Sciatic nerve (tissue), 2 donors: ENCODE measurements at regions of chr2 and their contacts with region 1.

Region 1: DNA sequence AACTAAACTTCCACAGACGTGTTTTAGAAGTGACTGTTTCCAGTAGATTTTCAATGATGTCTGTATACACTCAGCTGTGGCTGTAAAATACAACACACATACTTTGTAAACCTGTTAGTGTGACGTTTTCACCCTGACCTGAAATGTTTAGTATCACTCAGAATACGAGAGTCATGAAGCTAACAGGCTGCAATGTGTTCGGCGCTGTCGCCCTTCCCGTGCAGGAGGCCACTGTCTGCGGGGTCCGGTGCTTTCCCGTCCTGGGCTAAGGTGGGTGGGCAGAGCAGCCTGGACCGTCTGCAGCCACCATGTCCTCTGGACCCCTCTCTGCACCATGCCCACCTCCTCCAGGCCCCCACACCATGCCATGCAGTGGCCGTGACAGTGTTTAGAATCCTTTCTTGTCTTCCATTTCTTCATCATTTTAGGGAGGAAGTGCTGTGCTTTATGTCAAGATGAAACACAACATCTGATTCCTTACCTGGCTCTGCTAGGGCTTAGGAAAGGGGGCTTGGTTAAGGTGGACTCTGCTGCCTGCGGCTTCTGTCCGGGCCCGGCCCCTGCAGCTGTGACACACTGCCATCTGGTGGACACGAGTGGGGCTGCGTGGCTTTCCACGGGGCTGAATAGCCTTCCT is 53.8 kb upstream of the RBM44 start:
- DNase-seq: peak; percentile 90
- ATAC-seq: peak; percentile 94

Region 2: GRCh38 chr2:237669628-237670392 is 74.9 kb before region 1 on chr2:
- intact Hi-C with region 1: loop called (anchors 5 kb)
- DNase-seq: peak; percentile 70
- ATAC-seq: peak; percentile 82